ENCODE measurements at regions of chr5 and their contacts with region 1.

Region 1: DNA sequence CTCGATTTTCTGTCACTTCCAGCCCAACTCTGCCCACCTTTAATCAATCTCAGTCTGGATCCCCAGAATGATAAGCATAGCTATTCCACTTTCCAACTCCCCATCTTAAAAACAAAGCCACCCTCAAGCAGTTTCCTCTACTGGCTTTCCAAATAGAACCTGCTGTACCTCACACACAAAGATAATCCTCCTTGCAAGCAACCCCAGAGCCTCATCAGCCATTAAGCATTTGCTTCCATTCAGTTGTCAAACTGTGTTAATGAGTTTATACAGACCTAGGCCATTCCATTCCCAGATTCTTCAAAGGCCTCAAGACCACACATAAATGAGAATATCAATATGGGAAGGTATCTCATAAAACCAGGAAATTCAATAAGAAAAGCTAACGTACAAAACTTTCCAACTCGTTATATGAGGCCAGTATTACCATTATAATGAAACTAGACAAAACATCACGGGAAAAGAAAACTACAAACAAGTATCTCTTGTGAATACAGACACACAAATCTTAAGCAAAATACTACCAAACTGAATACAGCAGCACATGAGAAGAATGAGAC is 86.8 kb downstream of the DROSHA start:
- DNase-seq: no peak
- H3K4me3 ChIP-seq: no peak overlapping the region
- H3K27ac ChIP-seq: no peak overlapping the region
- H3K4me1 ChIP-seq: no peaks in the 10 kb centered on the region
- H3K27me3 ChIP-seq: no peaks in the 10 kb centered on the region
- CTCF ChIP-seq: no peak

Region 2: DNA sequence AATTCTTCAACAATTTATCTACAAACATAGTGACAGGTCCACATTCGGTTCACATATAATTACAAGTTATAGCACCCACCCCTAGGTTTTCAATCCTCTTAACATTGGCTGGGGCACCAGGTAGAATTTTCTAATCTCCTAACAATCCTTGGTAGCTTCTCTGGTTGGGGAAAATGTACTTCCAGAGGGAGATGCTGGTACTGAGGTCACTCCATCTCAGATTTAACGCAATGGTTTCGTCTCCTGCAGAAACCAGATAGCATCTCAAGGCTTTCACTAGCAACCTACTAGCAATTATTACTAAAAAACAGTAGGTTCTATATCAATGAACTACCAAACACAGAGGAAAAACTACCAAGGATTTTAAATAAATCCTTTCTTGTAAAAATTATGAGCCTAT is 15.1 kb after region 1 on chr5:
- CTCF ChIA-PET with region 1: no interaction called
- POLR2A ChIA-PET with region 1: no interaction called
- intact Hi-C with region 1: loop called (anchors 2 kb)
- DNase-seq: no peak
- H3K4me3 ChIP-seq: no peak overlapping the region
- H3K27ac ChIP-seq: no peak overlapping the region
- H3K4me1 ChIP-seq: no peaks in the 10 kb centered on the region
- H3K27me3 ChIP-seq: no peaks in the 10 kb centered on the region
- CTCF ChIP-seq: no peak

Measured in PC-9 (cell line).